ENCODE measurements at regions of chrX and their contacts with region 1.

Region 1: GRCh38 chrX:31036895-31037294 is 34.9 kb downstream of the FTHL17 start:
- DNase-seq: peak; percentile 58
- H3K4me3 ChIP-seq: no peak overlapping the region
- H3K27ac ChIP-seq: no peak overlapping the region
- H3K4me1 ChIP-seq: no peaks in the 10 kb centered on the region
- H3K27me3 ChIP-seq: no peaks in the 10 kb centered on the region
- CTCF ChIP-seq: peak; percentile 72

Region 2: DNA sequence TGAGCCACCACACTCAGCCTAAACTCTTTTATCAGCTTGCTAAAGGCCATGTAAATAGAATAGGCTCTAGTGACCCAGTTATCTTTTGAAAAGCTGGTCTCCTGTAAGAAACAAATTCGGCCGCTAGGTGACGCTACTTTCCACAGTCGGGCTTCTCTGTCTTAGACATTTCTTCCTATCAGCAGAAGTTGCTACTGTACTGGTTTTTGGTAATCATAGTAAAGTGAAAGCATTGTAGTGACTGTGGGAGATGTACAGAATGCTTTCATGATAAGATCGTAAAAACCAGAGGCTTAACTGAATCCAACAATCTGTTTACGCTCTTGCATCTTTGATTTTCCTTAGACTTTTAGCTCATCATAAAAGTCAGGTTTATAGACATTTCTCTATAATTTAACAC is 301.1 kb before region 1 on chrX:
- CTCF ChIA-PET with region 1: interaction called, 3 read pairs
- POLR2A ChIA-PET with region 1: no interaction called
- intact Hi-C with region 1: loop called (anchors 10 kb)
- DNase-seq: peak; percentile 74
- H3K4me3 ChIP-seq: no peak overlapping the region
- H3K27ac ChIP-seq: no peak overlapping the region
- H3K4me1 ChIP-seq: no peaks in the 10 kb centered on the region
- H3K27me3 ChIP-seq: no peaks in the 10 kb centered on the region
- CTCF ChIP-seq: peak; percentile 80

Region 3: DNA sequence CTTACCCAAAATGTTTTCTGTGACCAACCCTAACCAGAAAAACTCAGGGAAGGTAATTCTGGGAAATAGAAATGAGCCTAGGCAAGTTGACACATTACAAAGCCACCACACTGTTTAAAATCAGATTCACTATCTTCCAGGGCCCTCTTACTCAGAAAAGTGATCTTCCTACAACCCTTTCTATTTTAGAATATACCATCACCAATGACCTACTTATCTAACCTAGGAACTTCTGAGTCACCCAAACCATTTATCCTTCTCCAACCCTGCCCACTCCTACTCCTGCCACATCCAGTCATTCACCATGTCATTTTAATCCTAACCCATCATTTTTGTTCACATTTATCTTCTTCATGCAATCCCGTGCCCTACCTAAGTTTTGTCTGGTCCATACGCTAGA is 54.9 kb before region 1 on chrX:
- CTCF ChIA-PET with region 1: no interaction called
- POLR2A ChIA-PET with region 1: no interaction called
- intact Hi-C with region 1: no loop called
- DNase-seq: no peak
- H3K4me3 ChIP-seq: no peak overlapping the region
- H3K27ac ChIP-seq: no peak overlapping the region
- H3K4me1 ChIP-seq: no peaks in the 10 kb centered on the region
- H3K27me3 ChIP-seq: peaks cover 4% of the 10 kb centered on the region
- CTCF ChIP-seq: no peak

Region 4: GRCh38 chrX:31168551-31168950 is 131.7 kb after region 1 on chrX:
- CTCF ChIA-PET with region 1: no interaction called
- POLR2A ChIA-PET with region 1: no interaction called
- intact Hi-C with region 1: no loop called
- DNase-seq: no peak
- H3K4me3 ChIP-seq: no peak overlapping the region
- H3K27ac ChIP-seq: no peak overlapping the region
- H3K4me1 ChIP-seq: peaks cover 6% of the 10 kb centered on the region
- H3K27me3 ChIP-seq: no peaks in the 10 kb centered on the region
- CTCF ChIP-seq: no peak

Region 5: GRCh38 chrX:31213941-31214340 is 177.0 kb after region 1 on chrX:
- CTCF ChIA-PET with region 1: no interaction called
- POLR2A ChIA-PET with region 1: no interaction called
- intact Hi-C with region 1: loop called (anchors 5 kb)
- DNase-seq: peak; percentile 27
- H3K4me3 ChIP-seq: no peak overlapping the region
- H3K27ac ChIP-seq: no peak overlapping the region
- H3K4me1 ChIP-seq: no peaks in the 10 kb centered on the region
- H3K27me3 ChIP-seq: no peaks in the 10 kb centered on the region
- CTCF ChIP-seq: peak; percentile 62

Region 6: DNA sequence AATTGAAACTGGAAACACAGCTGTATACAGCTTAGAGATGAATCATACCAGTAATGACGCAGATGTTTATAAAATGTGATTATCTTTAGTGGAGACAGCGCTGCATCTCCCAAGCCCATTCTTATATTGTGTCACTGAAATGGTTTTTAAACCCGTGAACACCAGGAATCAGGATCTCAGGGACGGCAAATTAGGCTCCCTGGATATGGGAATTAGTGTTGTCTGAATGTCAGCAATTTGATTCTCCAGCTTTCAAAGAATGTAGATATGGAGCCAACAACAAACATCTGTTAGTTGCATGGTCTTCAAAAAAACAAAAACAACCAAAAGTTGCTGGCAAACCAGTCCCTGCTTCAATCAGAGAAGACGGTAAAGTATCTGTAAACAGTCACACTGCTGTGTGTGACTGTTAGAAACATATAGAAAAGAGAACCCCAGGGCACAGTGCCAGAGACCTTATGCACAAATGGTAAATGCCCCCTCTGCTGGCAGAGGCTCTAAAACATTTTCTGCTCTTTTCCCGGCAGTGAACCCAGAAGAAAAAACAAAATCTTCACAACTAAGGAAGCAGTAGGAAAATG is 386.8 kb after region 1 on chrX:
- CTCF ChIA-PET with region 1: interaction called, 5 read pairs
- POLR2A ChIA-PET with region 1: no interaction called
- intact Hi-C with region 1: loop called (anchors 2 kb)
- DNase-seq: peak; percentile 79
- H3K4me3 ChIP-seq: no peak overlapping the region
- H3K27ac ChIP-seq: no peak overlapping the region
- H3K4me1 ChIP-seq: no peaks in the 10 kb centered on the region
- H3K27me3 ChIP-seq: no peaks in the 10 kb centered on the region
- CTCF ChIP-seq: peak; percentile 64

Region 7: DNA sequence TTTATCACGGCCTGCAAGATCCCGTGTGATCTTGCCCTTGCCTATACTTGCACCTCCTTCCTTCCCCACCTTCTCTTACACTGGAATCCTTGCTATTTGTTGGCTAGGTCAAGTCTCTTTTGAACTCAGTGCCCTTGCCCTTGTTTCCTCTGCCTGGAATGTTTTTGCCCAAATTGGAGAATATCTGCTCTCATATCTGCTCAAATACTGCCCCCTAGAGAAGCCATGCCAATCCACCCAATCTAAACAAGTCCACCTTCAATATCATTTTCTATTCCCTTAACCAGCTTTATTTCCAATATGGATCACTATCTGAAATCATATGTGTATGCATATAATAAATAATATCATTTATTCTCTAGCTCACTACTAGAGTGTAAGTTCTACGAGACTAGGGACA is 1079.2 kb after region 1 on chrX:
- CTCF ChIA-PET with region 1: no interaction called
- POLR2A ChIA-PET with region 1: no interaction called
- intact Hi-C with region 1: loop called (anchors 10 kb)
- DNase-seq: peak; percentile 12
- H3K4me3 ChIP-seq: no peak overlapping the region
- H3K27ac ChIP-seq: no peak overlapping the region
- H3K4me1 ChIP-seq: no peaks in the 10 kb centered on the region
- H3K27me3 ChIP-seq: no peaks in the 10 kb centered on the region
- CTCF ChIP-seq: peak; percentile 46